Activated CD4-positive, alpha-beta T cell treated with anti-CD3 and anti-CD28 coated beads, Interleukin-2, amount 10 ng/mL, durations not matched to agents 24 days and 14 days (primary cell): ENCODE measurements at regions of chr1 and their contacts with region 1.

Region 1: DNA sequence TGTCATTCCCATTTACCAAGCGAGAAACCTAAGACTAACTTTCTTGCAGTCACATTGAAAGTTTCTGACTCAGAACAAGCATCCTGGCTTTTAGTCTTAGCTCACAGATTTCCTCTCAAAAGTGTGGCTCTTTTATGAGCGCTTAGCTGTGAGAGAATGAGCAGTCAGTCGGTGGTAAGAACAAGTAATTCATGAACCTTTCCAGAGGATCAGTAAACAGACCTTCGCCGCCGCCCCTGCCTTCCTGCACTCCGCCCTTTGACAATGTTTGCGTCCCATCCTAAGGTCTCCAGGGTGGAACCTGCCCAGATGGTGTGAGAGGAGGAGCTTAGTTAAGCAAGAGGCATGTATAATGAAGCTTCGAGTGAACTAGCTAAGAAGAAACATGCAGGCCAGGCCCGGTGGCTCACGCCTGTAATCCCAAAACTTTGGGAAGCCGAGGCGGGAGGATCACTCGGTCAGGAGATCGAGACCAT is 142.4 kb downstream of the GLUL start:
- DNase-seq: peak; percentile 79
- H3K4me3 Mint-ChIP-seq: no peak overlapping the region
- H3K27ac Mint-ChIP-seq: peak overlapping the region; percentile 80
- H3K4me1 Mint-ChIP-seq: peaks cover 14% of the 10 kb centered on the region
- H3K27me3 Mint-ChIP-seq: no peaks in the 10 kb centered on the region

Region 2: GRCh38 chr1:182149411-182149965 is 99.8 kb before region 1 on chr1:
- intact Hi-C with region 1: loop called (anchors 2 kb)
- DNase-seq: peak; percentile 88
- H3K4me3 Mint-ChIP-seq: peak overlapping the region; percentile 28
- H3K27ac Mint-ChIP-seq: peak overlapping the region; percentile 87
- H3K4me1 Mint-ChIP-seq: peaks cover 40% of the 10 kb centered on the region
- H3K27me3 Mint-ChIP-seq: no peaks in the 10 kb centered on the region

Region 3: DNA sequence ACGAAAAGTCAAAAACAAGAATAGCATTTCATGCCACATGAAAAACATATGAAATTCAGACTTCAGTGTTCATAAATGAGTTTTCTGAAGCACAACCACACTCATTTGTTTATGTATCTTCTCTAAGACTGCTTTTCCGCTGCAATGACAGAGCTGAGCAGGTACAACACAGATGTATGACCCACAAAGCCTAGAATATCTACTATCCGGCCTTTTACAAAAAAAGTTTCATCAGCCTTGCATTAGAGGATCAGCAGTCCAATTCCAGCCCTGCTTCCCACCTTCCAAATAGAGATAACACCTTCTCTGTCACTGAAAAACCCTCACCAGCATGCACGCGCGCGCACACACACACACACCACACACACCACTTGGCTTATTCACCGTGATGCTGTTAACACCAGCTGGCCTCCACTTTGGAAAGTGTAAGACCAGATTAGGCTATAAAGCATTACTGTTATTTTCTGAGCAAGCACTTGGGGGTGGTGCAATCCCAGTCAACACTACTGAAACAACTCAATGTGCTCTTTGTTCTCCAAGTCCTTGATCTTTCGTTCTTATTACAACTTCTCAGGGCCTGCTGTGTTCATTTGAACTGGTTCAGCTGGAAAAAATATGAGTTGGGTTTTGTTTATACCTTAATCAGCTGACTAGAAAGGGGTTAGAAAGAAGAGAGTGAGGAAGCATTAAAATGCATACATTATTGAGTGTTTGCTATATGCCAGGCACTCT is 52.4 kb after region 1 on chr1:
- intact Hi-C with region 1: loop called (anchors 1 kb)
- DNase-seq: peak; percentile 62
- H3K4me3 Mint-ChIP-seq: no peak overlapping the region
- H3K27ac Mint-ChIP-seq: peak overlapping the region; percentile 83
- H3K4me1 Mint-ChIP-seq: peaks cover 30% of the 10 kb centered on the region
- H3K27me3 Mint-ChIP-seq: no peaks in the 10 kb centered on the region

Region 4: DNA sequence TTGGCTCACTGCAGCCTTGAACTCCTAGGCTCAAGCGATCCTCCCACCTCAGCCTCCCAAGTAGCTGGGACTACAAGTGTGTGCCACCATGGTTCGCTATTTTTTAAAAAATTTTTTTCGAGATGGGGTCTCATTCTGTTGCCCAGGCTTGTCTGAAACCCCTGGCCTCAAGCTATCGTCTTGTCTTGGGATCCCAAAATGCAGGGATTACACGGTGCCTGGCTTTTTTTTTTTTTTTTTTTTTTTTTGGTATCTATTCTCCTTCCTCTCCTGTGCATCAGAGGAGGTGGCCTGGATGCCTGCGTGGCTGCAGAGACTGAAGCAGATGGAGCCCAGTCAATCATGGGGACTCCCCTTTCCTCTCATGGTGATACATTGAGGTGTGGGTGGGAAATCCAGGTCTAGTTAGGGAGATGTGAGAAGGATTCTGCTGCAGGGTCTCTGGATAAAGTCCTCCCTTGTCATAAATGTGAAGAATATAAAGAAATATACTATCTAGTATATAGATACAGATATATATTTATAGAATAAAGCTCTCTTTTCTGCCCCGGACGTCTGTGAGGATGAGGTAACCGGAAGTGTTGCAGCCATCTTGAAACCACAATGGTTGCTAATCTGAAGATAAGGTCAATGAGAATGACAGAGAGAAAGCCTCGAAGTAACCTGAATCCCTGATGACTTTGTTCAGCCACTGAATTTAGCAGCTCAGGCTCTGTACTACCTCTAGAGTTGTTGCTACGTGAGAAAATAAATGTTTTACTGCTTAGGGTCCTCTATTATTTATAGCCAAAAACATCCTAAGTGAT is 181.2 kb after region 1 on chr1:
- intact Hi-C with region 1: no loop called
- DNase-seq: peak; percentile 86
- H3K4me3 Mint-ChIP-seq: peak overlapping the region; percentile 22
- H3K27ac Mint-ChIP-seq: peak overlapping the region; percentile 42
- H3K4me1 Mint-ChIP-seq: peaks cover 10% of the 10 kb centered on the region
- H3K27me3 Mint-ChIP-seq: peaks cover 15% of the 10 kb centered on the region

Region 5: DNA sequence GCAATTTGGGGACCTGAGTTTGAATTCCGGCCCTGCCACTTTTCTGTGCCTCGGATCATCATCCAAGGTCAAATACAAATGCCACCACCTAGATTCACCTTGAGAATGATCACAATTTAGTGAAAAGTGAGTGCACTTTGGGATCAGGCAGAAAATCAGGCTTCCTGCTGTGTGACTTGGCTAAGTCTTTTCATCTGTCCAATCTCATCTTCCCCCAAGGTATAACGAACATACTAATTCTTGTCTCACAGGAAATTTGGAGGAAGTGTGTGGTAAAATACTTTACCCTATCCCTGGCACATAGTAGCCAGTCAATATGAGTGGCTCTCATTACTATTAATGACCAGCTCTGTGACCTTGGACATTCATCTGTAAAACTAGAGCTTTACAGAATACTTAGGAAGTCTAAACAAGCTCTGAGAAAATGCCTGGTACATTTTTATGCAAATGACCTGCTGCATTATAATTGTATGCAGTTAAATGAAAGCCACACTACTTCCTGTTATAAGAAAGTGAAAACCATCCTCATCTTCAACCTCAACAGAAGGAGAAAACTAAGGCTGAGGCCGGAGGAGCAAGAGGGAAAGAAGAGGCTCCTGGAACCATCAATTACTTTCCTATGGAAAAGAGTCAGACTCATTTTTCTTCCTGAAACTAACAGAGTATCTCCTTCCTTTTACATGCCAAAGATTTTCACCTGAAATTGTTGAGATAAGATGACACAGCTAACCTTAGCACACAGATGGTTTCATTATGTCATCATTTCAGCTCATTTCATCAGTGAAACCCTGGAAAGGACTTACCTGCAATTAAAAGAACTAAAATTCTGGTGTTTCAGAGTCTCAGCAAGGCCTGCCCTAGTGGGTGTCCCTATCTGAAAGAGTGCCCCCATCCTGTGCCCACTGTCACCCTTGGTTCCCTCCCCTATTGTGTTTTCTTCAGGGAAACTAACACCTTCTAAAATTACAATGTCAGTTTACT is 467.8 kb after region 1 on chr1:
- intact Hi-C with region 1: loop called (anchors 10 kb)
- DNase-seq: no peak
- H3K4me3 Mint-ChIP-seq: no peak overlapping the region
- H3K27ac Mint-ChIP-seq: peak overlapping the region; percentile 22
- H3K4me1 Mint-ChIP-seq: peaks cover 42% of the 10 kb centered on the region
- H3K27me3 Mint-ChIP-seq: no peaks in the 10 kb centered on the region